CD8-positive, alpha-beta T cell (primary cell): ENCODE measurements at regions of chr20 and their contacts with region 1.

Region 1: DNA sequence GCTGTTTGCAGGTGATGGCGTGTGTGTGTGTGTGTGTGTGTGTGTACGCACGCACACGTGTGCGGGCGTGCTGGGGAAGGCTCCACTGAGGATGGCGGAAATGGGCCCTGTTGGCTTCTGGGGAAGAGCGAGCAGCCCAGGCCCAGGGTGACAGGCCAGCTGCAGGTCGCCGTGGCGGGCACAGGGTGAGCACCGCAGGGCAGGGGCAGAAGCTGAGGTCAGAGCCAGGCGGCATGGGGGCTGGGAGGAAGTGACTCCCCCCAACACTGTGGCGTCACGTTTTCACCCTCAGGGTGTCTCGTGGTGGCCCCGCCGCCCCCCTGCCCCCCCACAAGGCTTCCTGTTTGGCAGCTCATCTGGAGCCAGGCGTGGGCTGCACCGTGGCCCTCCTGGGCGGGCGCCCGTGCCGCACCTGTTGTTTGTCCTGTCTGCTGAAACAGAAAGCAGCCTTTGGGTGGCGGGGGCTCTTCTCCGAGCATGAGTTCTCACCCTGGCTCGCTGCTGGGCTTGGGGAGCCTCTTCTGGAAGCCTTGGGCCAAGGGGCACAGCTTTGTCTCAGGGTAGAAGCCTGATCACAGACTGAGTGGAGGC is 7.1 kb downstream of the RBM38 start:
- DNase-seq: peak; percentile 88 to 98 (median 96)
- ATAC-seq: peak; percentile 69
- H3K4me3 ChIP-seq: peak overlapping the region; percentile 40 to 63
- H3K4me3 Mint-ChIP-seq: peak overlapping the region; percentile 76
- H3K27ac ChIP-seq: peak overlapping the region; percentile 78 to 90
- H3K27ac Mint-ChIP-seq: peak overlapping the region; percentile 97
- H3K4me1 ChIP-seq: peaks cover 96% of the 10 kb centered on the region
- H3K4me1 Mint-ChIP-seq: peaks cover 93% of the 10 kb centered on the region
- H3K27me3 ChIP-seq: no peaks in the 10 kb centered on the region
- H3K27me3 Mint-ChIP-seq: no peaks in the 10 kb centered on the region
- CTCF ChIP-seq: no peak

Region 2: DNA sequence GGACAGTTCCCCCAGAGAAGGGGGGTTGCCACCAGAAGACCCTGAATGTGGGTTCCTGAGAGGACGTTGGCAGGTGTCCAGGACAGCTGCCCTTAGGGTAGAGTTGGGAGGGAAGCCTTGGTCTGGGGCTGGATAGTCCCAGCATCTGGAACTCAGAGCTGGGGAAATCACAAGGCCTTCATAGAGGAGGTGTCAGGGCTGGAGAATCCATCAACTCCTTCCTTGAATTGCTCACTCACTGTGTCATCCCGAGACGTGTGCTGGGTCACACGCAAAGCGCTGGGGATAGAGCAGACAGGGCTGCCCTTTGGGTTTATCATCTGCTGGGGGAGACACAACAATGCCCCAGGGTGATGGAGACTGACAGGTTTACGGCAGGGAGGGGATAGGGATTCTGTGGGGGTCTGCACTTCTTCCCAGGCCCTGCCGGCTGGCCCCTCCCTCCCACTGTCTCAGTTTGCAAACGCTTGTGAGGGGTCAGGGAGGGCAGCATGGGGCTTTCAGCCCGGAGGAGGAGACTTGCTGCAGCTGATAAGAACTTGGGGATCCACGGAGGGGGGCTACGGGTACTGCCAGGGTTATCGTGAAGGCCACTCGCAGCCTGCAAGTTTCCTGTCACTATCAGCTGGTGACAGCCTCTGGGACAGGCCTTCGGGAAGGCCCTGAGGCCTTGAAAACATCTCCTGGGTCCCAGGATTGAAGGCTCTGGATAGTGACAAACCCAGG is 11.5 kb after region 1 on chr20:
- CTCF ChIA-PET with region 1: interaction called, 14 read pairs
- POLR2A ChIA-PET with region 1: interaction called, 26 read pairs
- intact Hi-C with region 1: no loop called
- DNase-seq: peak in 3 of 9 experiments; percentile 21 to 32 (median 23)
- ATAC-seq: no peak
- H3K4me3 ChIP-seq: no peak overlapping the region
- H3K4me3 Mint-ChIP-seq: no peak overlapping the region
- H3K27ac ChIP-seq: no peak overlapping the region
- H3K27ac Mint-ChIP-seq: peak overlapping the region; percentile 49
- H3K4me1 ChIP-seq: peaks cover 21% of the 10 kb centered on the region
- H3K4me1 Mint-ChIP-seq: peaks cover 38% of the 10 kb centered on the region
- H3K27me3 ChIP-seq: no peaks in the 10 kb centered on the region
- H3K27me3 Mint-ChIP-seq: no peaks in the 10 kb centered on the region
- CTCF ChIP-seq: no peak

Region 3: DNA sequence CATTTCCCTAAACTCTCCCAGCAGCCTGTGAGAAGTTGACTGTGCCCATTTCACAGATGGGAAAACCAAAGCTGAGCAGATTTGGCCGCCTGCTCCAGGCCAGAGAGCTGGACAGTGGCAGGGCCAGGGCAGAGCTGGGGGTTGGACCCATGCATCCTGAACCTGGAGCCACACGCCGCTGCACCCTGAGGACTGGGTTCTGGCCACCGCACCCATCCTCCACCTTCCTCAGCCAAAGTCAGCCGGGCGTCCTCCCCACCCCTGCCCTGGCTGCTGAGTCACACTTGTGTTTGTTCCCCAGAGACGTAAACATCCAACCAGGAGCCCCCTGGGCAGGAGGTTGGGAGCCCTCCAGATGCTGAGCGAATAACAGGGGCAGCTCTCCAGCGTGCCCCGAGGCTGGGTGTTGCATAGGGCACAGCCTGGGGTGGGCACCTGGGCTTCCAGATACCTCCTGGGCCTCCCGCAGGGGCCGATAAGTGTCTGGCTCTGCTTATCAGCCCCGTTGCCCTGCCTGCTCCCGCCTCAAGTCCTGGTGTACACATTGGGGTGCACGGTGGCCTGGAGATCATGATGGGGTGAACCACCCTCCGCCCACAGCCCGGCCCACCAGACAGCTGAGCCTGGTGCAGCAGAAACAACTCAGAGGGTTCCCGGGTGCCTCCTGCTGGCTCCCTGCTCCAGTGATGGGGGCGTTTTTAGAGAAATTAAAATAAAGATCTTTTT is 16.7 kb after region 1 on chr20:
- CTCF ChIA-PET with region 1: interaction called, 14 read pairs
- POLR2A ChIA-PET with region 1: interaction called, 26 read pairs
- intact Hi-C with region 1: no loop called
- DNase-seq: no peak
- ATAC-seq: no peak
- H3K4me3 ChIP-seq: no peak overlapping the region
- H3K4me3 Mint-ChIP-seq: no peak overlapping the region
- H3K27ac ChIP-seq: no peak overlapping the region
- H3K27ac Mint-ChIP-seq: no peak overlapping the region
- H3K4me1 ChIP-seq: no peaks in the 10 kb centered on the region
- H3K4me1 Mint-ChIP-seq: peaks cover 20% of the 10 kb centered on the region
- H3K27me3 ChIP-seq: no peaks in the 10 kb centered on the region
- H3K27me3 Mint-ChIP-seq: no peaks in the 10 kb centered on the region
- CTCF ChIP-seq: no peak

Region 4: DNA sequence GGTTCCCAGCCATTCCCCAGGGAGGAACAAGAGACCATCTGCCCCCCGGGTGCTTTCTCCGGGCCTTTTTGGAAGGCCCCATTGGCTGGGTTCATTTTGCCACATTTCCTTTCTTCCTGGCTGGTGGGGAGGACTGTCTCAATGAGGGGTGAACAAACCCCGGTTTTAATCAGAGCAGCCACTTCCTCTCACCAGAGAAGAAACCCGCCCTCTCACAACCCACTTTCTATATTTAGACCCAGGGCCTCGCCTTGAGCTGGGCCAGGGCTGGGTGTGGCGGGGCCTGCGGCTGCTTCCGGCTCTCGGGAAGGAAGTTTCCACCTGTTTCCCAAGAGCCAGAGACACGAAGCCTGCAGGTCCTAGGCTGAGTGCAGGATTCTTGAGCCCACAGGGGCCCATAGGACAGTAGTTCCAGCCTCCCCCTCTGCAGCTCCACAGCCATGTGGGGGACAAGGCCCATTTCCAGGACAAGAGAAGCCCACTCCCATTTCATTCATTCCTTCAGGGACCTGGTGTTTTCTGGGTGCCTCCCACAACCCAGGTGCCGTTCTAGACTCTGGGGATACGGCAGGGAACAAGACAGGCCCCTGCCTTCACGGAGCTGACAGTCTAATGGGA is 34.7 kb after region 1 on chr20:
- CTCF ChIA-PET with region 1: interaction called, 58 read pairs
- POLR2A ChIA-PET with region 1: interaction called, 57 read pairs
- intact Hi-C with region 1: loop called in 1 of 2 experiments (anchors 1 kb)
- DNase-seq: peak; percentile 27 to 87 (median 69)
- ATAC-seq: peak; percentile 86
- H3K4me3 ChIP-seq: peak overlapping the region; percentile 7 to 38
- H3K4me3 Mint-ChIP-seq: peak overlapping the region; percentile 52
- H3K27ac ChIP-seq: peak overlapping the region; percentile 2 to 68
- H3K27ac Mint-ChIP-seq: peak overlapping the region; percentile 67
- H3K4me1 ChIP-seq: peaks cover 55% of the 10 kb centered on the region
- H3K4me1 Mint-ChIP-seq: peaks cover 64% of the 10 kb centered on the region
- H3K27me3 ChIP-seq: no peaks in the 10 kb centered on the region
- H3K27me3 Mint-ChIP-seq: no peaks in the 10 kb centered on the region
- CTCF ChIP-seq: no peak

Region 5: DNA sequence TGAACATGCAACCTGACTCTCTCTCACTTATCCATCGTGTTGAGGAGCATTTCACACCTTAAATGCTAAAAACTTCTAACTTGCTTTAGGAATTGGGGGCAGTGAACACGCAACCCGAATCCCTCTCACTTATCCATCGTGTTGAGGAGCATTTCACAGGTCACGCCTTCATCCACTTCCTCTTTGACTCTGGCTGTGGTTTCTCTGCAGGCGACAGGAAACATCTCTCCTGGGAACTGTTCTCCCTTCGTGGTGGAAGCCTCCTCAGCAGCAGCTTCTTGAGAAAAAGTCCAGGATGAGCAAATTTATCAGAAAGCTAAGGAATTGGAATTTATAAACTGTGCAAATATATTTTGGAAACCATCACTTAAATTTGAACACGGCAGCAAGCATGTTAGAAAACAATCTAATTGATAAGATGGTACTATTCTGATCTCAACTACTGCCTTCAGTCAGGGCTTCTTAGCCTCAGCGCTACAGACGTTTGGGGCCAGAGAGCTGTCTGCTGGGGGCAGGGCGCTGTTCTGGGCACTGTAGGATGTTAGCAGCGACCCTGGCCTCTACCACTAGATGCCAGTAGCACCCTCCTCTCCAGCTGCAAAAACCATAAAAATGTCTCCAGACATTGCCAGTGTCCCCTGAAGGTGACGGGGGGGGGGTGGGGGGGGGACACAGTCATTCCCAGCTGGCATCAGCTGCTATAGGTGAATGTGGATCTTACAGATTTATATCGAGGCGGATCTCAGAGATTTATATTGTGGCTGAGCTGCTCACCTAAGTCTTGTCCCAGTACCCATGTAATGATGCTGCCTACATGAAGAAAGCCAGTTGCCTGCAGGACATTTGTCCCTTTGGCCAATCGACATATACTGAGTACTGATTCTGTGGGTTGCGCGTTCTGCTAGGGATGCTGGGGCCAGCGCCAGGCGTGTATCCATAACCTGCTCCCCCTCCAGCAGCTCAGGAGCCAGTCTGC is 100.4 kb after region 1 on chr20:
- CTCF ChIA-PET with region 1: interaction called, 11 read pairs
- POLR2A ChIA-PET with region 1: interaction called, 3 read pairs
- intact Hi-C with region 1: no loop called
- DNase-seq: peak in 5 of 9 experiments; percentile 34 to 61 (median 42)
- ATAC-seq: peak; percentile 74
- H3K4me3 ChIP-seq: no peak overlapping the region
- H3K4me3 Mint-ChIP-seq: no peak overlapping the region
- H3K27ac ChIP-seq: no peak overlapping the region
- H3K27ac Mint-ChIP-seq: no peak overlapping the region
- H3K4me1 ChIP-seq: peaks cover 6% of the 10 kb centered on the region
- H3K4me1 Mint-ChIP-seq: peaks cover 13% of the 10 kb centered on the region
- H3K27me3 ChIP-seq: peaks cover 0 to 4% of the 10 kb centered on the region in 2 experiments
- H3K27me3 Mint-ChIP-seq: peaks cover 32% of the 10 kb centered on the region
- CTCF ChIP-seq: peak; percentile 48

Region 6: DNA sequence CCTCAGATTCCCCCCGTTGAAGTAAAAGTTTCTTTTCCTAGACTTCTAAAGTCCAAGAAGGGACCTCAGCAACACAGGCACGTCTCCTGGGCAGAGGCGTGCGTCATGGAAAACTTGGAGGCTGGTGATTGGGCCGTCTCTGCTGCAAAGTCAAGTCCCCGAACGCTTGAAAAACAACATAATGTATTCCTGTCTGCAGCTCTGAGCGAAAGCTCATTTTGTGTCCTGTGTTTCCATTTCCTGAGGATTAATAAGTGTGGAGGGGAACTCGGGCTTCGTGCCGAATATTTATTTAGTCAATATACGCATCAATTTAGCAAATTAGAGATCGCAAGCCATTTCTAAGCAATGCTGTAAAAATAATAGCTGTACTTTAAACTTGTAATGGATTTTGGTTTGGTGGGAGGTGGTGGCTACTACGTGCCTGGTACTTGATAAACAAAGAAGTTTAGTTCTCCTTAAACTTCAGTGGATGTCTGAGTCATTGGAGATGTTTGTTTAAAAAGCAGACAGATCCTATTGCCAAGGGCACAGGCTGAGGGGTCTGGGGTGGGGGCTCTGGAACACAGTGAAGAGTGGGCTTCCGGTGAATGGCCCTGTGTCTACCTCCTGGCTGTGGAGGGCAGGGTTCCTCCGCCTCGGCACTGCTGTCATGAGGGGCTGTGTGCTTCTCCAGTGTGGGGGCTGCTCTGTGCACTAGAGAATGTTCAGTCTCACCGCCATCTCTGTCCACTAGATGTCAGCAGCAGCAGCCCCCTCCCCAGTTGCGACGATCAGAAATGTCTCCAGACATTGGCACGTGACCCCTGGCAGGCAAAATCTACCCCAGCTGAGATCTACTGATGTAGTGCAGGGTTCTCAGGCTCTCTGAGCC is 184.3 kb after region 1 on chr20:
- CTCF ChIA-PET with region 1: no interaction called
- POLR2A ChIA-PET with region 1: no interaction called
- intact Hi-C with region 1: no loop called
- DNase-seq: no peak
- ATAC-seq: no peak
- H3K4me3 ChIP-seq: no peak overlapping the region
- H3K4me3 Mint-ChIP-seq: no peak overlapping the region
- H3K27ac ChIP-seq: no peak overlapping the region
- H3K27ac Mint-ChIP-seq: no peak overlapping the region
- H3K4me1 ChIP-seq: no peaks in the 10 kb centered on the region
- H3K4me1 Mint-ChIP-seq: no peaks in the 10 kb centered on the region
- H3K27me3 ChIP-seq: no peaks in the 10 kb centered on the region
- H3K27me3 Mint-ChIP-seq: peaks cover 64% of the 10 kb centered on the region
- CTCF ChIP-seq: no peak

Region 7: GRCh38 chr20:57628047-57628961 is 230.0 kb after region 1 on chr20:
- CTCF ChIA-PET with region 1: interaction called, 3 read pairs
- POLR2A ChIA-PET with region 1: interaction called, 3 read pairs
- intact Hi-C with region 1: loop called in 1 of 2 experiments (anchors 1 kb)
- DNase-seq: peak; percentile 40 to 92 (median 67)
- ATAC-seq: peak; percentile 80
- H3K4me3 ChIP-seq: peak overlapping the region; percentile 31 to 44
- H3K4me3 Mint-ChIP-seq: peak overlapping the region; percentile 94
- H3K27ac ChIP-seq: peak overlapping the region; percentile 71 to 91
- H3K27ac Mint-ChIP-seq: peak overlapping the region; percentile 99
- H3K4me1 ChIP-seq: peaks cover 61% of the 10 kb centered on the region
- H3K4me1 Mint-ChIP-seq: peaks cover 74% of the 10 kb centered on the region
- H3K27me3 ChIP-seq: no peaks in the 10 kb centered on the region
- H3K27me3 Mint-ChIP-seq: no peaks in the 10 kb centered on the region
- CTCF ChIP-seq: no peak

Region 8: DNA sequence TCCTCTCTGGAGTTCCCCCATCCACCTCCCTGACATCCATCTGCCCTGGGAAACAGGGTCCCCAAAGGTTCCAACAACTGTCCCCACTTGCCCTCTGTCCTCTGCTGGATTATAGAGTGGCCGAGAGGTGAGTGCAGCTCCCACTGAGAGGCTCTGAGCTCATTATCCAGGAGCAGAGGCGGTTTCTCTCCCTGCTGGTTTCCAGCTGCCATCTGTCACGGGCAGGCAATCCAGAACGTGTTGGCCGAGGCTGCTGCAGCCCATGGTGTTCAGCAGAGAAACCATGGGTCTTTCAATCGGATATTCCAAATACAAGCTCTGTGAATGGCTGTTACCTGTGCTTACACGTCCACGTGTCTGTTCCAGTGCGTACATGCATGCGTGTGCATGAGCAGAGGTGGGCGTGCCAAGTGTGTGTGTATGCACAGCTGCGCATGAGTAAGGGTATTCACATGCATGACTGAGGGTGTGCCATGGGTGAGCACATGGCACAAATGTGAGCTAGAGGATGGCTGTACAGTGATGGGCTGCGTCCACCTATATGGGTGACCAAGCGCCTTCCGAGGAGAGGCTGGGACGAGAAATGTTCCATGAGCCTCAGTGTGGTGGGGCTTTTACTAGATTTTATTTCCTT is 495.2 kb after region 1 on chr20:
- CTCF ChIA-PET with region 1: no interaction called
- POLR2A ChIA-PET with region 1: no interaction called
- intact Hi-C with region 1: no loop called
- DNase-seq: no peak
- ATAC-seq: no peak
- H3K4me3 ChIP-seq: no peak overlapping the region
- H3K4me3 Mint-ChIP-seq: no peak overlapping the region
- H3K27ac ChIP-seq: no peak overlapping the region
- H3K27ac Mint-ChIP-seq: no peak overlapping the region
- H3K4me1 ChIP-seq: no peaks in the 10 kb centered on the region
- H3K4me1 Mint-ChIP-seq: no peaks in the 10 kb centered on the region
- H3K27me3 ChIP-seq: no peaks in the 10 kb centered on the region
- H3K27me3 Mint-ChIP-seq: peaks cover 18% of the 10 kb centered on the region
- CTCF ChIP-seq: no peak